Cardiac septum (tissue), 1 donor: ENCODE measurements at regions of chr2 and their contacts with region 1.

Region 1: GRCh38 chr2:152335010-152335725 is at the start of gene FMNL2:
- DNase-seq: peak; percentile 88
- total RNA-seq, gene FMNL2: 6.2 TPM

Region 2: GRCh38 chr2:152222975-152223637 is 112.1 kb before region 1 on chr2:
- intact Hi-C with region 1: loop called (anchors 5 kb)
- DNase-seq: no peak

Region 3: GRCh38 chr2:152418688-152419087 is 83.5 kb after region 1 on chr2:
- intact Hi-C with region 1: loop called (anchors 5 kb)
- DNase-seq: no peak

Region 4: GRCh38 chr2:152627351-152627957 is 292.3 kb after region 1 on chr2:
- intact Hi-C with region 1: loop called (anchors 5 kb)
- DNase-seq: no peak

Region 5: DNA sequence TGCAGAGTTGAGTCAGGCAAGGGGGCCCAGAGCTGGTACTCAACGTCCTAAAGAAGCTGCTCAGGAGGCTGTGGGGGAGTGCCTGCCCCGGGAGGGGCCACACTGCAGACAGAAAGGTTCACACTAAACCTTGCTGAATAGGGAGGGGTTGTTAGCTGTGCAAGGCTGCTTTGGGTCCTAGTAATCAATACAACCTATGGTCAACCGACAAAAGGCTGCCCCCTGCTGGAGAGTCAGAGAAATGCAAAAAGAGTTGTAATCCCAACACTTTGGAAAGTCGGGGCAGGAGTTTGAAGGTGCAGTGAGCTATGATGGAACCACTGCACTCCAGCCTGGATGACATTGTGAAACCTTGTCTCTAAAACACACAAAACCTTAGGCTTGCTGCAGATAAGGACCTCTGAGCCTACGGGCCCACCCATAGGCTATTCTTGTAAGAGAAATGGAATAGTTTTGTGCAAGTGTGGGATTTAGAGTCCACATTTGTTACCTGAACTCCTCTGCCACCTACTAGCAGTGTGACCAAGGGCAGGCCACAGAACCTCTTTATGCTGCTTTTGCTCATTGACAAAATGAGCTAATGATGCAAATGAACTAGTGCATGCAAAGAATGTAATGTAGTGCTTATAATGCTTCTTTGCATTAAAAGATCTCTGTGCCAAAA is 300.6 kb after region 1 on chr2:
- intact Hi-C with region 1: loop called (anchors 5 kb)
- DNase-seq: peak; percentile 82

Region 6: GRCh38 chr2:152717228-152718075 is 382.3 kb after region 1 on chr2 and contains the start of gene PRPF40A:
- intact Hi-C with region 1: loop called (anchors 10 kb)
- DNase-seq: peak; percentile 99
- total RNA-seq, gene PRPF40A: 36.3 TPM

Region 7: GRCh38 chr2:152762202-152762601 is 427.0 kb after region 1 on chr2:
- intact Hi-C with region 1: no loop called
- DNase-seq: no peak

Region 8: GRCh38 chr2:153287110-153287801 is 952.1 kb after region 1 on chr2:
- intact Hi-C with region 1: no loop called
- DNase-seq: no peak